ENCODE measurements at regions of chr7 and their contacts with region 1.

Region 1: GRCh38 chr7:121151774-121152221 is 163.3 kb downstream of the CPED1 start:
- DNase-seq: no peak
- ATAC-seq: no peak
- H3K4me3 ChIP-seq: no peak overlapping the region
- H3K4me3 Mint-ChIP-seq: no peak overlapping the region
- H3K27ac ChIP-seq: no peak overlapping the region
- H3K27ac Mint-ChIP-seq: no peak overlapping the region
- H3K4me1 ChIP-seq: no peaks in the 10 kb centered on the region
- H3K4me1 Mint-ChIP-seq: no peaks in the 10 kb centered on the region
- H3K27me3 ChIP-seq: no peaks in the 10 kb centered on the region
- H3K27me3 Mint-ChIP-seq: peaks cover 3 to 21% (median 8%) of the 10 kb centered on the region in 5 donors

Region 2: GRCh38 chr7:121167971-121168370 is 16.2 kb after region 1 on chr7:
- CTCF ChIA-PET with region 1: no interaction called
- POLR2A ChIA-PET with region 1: no interaction called
- intact Hi-C with region 1: loop called in 1 of 2 experiments (anchors 1 kb)
- DNase-seq: no peak
- ATAC-seq: no peak
- H3K4me3 ChIP-seq: no peak overlapping the region
- H3K4me3 Mint-ChIP-seq: no peak overlapping the region
- H3K27ac ChIP-seq: no peak overlapping the region
- H3K27ac Mint-ChIP-seq: no peak overlapping the region
- H3K4me1 ChIP-seq: no peaks in the 10 kb centered on the region
- H3K4me1 Mint-ChIP-seq: no peaks in the 10 kb centered on the region
- H3K27me3 ChIP-seq: no peaks in the 10 kb centered on the region
- H3K27me3 Mint-ChIP-seq: peaks cover 0 to 9% (median 6%) of the 10 kb centered on the region in 5 donors

Region 3: GRCh38 chr7:121530227-121531174 is 378.7 kb after region 1 on chr7:
- CTCF ChIA-PET with region 1: no interaction called
- POLR2A ChIA-PET with region 1: no interaction called
- intact Hi-C with region 1: no loop called
- DNase-seq: peak in 1 of 9 donors; percentile 60
- ATAC-seq: peak; percentile 94
- H3K4me3 ChIP-seq: no peak overlapping the region
- H3K4me3 Mint-ChIP-seq: peak overlapping the region in 1 of 10 donors; percentile 54
- H3K27ac ChIP-seq: no peak overlapping the region
- H3K27ac Mint-ChIP-seq: peak overlapping the region in 3 of 9 donors; percentile 3 to 91 (median 51)
- H3K4me1 ChIP-seq: peaks cover 0 to 6% of the 10 kb centered on the region in 2 donors
- H3K4me1 Mint-ChIP-seq: peaks cover 0 to 45% (median 0%) of the 10 kb centered on the region in 7 donors
- H3K27me3 ChIP-seq: no peaks in the 10 kb centered on the region
- H3K27me3 Mint-ChIP-seq: peaks cover 0 to 4% (median 0%) of the 10 kb centered on the region in 5 donors

Region 4: DNA sequence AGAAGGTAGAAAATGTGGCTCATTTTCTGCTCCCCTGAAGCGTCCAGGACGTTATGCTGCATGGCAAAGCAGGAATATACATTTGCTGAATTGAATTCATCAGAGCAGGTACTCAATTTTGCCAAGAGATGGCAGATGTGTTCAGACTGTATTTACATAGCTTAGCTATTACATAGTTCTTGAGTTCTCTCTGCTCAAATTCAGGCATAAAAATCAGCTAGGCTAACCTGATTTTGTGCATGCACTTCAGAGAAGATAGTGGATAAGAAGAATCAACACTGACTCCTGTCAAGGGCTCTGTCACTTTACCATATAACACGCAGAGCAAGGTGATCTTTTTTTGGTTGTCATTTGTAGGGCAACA is 453.5 kb after region 1 on chr7:
- CTCF ChIA-PET with region 1: no interaction called
- POLR2A ChIA-PET with region 1: no interaction called
- intact Hi-C with region 1: no loop called
- DNase-seq: no peak
- ATAC-seq: no peak
- H3K4me3 ChIP-seq: no peak overlapping the region
- H3K4me3 Mint-ChIP-seq: no peak overlapping the region
- H3K27ac ChIP-seq: no peak overlapping the region
- H3K27ac Mint-ChIP-seq: no peak overlapping the region
- H3K4me1 ChIP-seq: no peaks in the 10 kb centered on the region
- H3K4me1 Mint-ChIP-seq: peaks cover 0 to 1% (median 0%) of the 10 kb centered on the region in 7 donors
- H3K27me3 ChIP-seq: no peaks in the 10 kb centered on the region
- H3K27me3 Mint-ChIP-seq: peaks cover 0 to 14% (median 6%) of the 10 kb centered on the region in 5 donors

Region 5: GRCh38 chr7:122438006-122438405 is 1286.2 kb after region 1 on chr7:
- CTCF ChIA-PET with region 1: no interaction called
- POLR2A ChIA-PET with region 1: no interaction called
- intact Hi-C with region 1: no loop called
- DNase-seq: no peak
- ATAC-seq: no peak
- H3K4me3 ChIP-seq: no peak overlapping the region
- H3K4me3 Mint-ChIP-seq: no peak overlapping the region
- H3K27ac ChIP-seq: no peak overlapping the region
- H3K27ac Mint-ChIP-seq: no peak overlapping the region
- H3K4me1 ChIP-seq: no peaks in the 10 kb centered on the region
- H3K4me1 Mint-ChIP-seq: peaks cover 0 to 1% (median 0%) of the 10 kb centered on the region in 7 donors
- H3K27me3 ChIP-seq: no peaks in the 10 kb centered on the region
- H3K27me3 Mint-ChIP-seq: no peaks in the 10 kb centered on the region

Measured in naive thymus-derived CD4-positive, alpha-beta T cell (primary cell).